ENCODE measurements at regions of chr21 and their contacts with region 1.

Region 1: DNA sequence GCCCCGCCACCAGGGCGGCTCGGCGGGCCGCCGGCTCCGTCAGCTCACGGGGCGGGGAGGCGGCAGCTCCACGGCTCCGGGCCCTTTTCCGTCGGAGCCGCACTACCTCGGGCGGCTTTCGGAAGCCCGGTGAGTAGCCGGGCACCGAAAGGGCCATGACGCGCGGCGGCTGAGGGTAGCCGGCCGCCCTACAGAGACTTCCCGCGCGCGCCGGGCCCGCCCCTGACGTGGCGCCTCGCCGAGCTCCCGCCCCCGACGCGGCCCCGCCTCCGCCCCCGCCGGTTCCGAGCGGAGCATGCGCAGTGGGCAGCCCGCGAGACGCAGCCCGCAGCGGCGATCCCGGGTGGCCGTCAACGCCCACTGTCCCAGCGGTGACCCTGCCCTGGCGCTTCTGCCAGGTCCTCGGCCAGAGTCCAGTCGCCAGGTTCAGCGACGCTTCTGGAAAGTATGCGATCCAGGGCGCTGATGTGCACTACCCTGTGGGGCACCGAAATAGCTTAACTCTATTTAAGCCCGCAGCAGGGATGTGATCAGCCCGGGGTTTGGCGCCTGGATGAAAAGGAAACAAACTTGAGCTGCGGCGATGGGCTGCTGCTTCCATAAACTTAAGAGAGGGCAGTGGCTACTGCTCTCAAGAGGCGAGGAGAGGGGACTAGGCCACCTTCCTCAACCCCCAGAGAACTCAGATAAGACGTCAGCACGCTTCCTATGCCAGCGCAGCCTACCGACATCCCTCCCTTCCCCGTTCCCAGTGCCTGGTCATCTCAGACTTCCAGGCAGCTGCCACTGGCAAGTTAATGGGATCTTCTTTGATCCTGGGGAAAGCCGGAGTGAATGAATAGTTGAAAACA is at the start of gene DONSON:
- DNase-seq: peak; percentile 87
- H3K4me3 Mint-ChIP-seq: peak within 1 kb of the TSS; percentile 92
- H3K27ac Mint-ChIP-seq: peak within 1 kb of the TSS; percentile 93
- H3K4me1 Mint-ChIP-seq: peaks cover 27% of the 10 kb centered on the region
- H3K27me3 Mint-ChIP-seq: no peaks in the 10 kb centered on the region
- total RNA-seq, gene DONSON: 39.6 to 41.5 TPM

Region 2: DNA sequence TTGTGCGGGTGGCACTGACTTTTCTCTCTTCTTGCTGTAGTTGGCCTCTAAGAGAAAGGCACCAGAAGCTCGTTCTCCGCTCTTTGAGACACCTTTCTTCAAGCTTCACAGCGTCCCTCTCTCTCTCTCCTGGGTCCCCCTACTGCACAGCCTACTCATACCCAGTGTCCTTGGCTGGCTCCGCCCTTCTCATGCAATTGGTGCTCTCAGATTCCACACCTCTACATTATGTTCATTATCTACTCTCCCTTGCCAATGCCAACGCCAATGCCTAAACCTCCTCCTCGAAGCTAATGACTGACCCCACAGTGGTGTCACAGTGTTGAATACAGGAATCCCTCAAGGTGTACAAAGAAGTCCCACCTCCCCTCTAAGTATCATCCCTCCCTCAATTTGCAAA is 92.4 kb before region 1 on chr21:
- CTCF ChIA-PET with region 1: no interaction called
- POLR2A ChIA-PET with region 1: no interaction called
- DNase-seq: no peak
- H3K4me3 Mint-ChIP-seq: no peak overlapping the region
- H3K27ac Mint-ChIP-seq: no peak overlapping the region
- H3K4me1 Mint-ChIP-seq: peaks cover 7% of the 10 kb centered on the region
- H3K27me3 Mint-ChIP-seq: peaks cover 4% of the 10 kb centered on the region

Region 3: DNA sequence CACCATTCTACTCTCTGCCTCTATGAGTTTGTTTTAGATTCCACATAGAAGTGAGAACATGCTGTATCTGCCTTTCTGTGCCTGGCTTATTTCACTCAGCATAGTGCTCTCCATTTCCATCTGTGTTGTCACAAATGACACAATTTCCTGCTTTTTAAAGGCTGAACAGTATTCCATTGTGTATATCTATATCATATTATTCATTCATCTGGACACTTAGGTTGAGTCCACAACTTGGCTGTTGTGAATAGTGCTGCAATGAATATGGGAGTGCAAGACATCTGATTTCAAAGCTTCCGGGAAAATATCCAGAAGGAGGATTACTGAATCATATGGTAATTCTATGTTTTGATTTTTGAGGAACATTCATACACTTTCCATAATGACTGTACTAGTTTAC is 19.8 kb after region 1 on chr21:
- CTCF ChIA-PET with region 1: interaction called, 13 read pairs
- POLR2A ChIA-PET with region 1: interaction called, 8 read pairs
- DNase-seq: no peak
- H3K4me3 Mint-ChIP-seq: no peak overlapping the region
- H3K27ac Mint-ChIP-seq: no peak overlapping the region
- H3K4me1 Mint-ChIP-seq: peaks cover 4% of the 10 kb centered on the region
- H3K27me3 Mint-ChIP-seq: no peaks in the 10 kb centered on the region

Measured in activated CD4-positive, alpha-beta T cell treated with anti-CD3 and anti-CD28 coated beads, Interleukin-2, amount 10 ng/mL, durations not matched to agents 7 days and 5 days (primary cell).